ENCODE measurements at regions of chr19 and their contacts with region 1.

Region 1: GRCh38 chr19:41144403-41144802 is 30.2 kb downstream of the CYP2F1 start:
- DNase-seq: peak; percentile 83
- H3K4me3 ChIP-seq: no peak overlapping the region
- H3K27ac ChIP-seq: no peak overlapping the region
- H3K4me1 ChIP-seq: no peaks in the 10 kb centered on the region
- H3K27me3 ChIP-seq: peaks cover 8% of the 10 kb centered on the region
- CTCF ChIP-seq: peak; percentile 85

Region 2: DNA sequence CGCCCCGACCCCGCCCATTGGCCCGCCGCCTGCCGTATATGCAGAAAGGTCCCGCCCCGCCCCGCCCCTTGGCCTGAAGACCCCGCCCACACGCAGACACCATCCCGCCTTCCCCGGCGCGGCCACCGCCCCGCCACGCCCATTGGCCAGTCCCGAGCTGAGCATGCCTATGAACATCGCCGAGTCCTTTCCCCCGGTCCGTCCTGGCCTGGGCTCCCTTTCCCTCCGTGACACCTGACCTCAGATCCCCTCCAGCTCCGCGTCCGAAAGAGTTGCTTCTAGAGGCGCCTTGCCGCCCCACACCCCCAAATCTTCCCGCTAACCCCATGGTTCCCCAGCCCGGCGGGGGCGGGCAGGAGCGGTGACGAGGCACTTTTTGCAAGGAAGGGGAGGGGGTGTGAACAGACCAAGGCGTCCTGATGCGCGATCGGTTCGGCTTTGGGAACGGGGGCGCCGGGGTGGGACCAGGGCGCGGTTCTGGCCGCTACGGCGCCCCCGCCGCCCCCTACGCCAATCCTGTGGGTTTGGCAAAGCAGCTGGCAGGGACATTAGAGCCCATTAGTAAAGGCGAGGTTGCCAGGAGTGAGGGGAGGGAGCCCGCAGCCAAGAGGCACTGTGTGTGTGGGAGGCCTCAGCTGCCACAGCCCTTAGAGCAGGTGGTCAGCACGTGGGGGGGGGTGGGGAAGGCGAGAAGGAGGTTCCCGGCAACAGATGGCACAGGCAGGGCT is 453.5 kb before region 1 on chr19:
- CTCF ChIA-PET with region 1: interaction called, 10 read pairs
- POLR2A ChIA-PET with region 1: no interaction called
- intact Hi-C with region 1: no loop called
- DNase-seq: peak; percentile 93
- H3K4me3 ChIP-seq: peak overlapping the region; percentile 94
- H3K27ac ChIP-seq: peak overlapping the region; percentile 96
- H3K4me1 ChIP-seq: peaks cover 17% of the 10 kb centered on the region
- H3K27me3 ChIP-seq: no peaks in the 10 kb centered on the region
- CTCF ChIP-seq: no peak

Region 3: DNA sequence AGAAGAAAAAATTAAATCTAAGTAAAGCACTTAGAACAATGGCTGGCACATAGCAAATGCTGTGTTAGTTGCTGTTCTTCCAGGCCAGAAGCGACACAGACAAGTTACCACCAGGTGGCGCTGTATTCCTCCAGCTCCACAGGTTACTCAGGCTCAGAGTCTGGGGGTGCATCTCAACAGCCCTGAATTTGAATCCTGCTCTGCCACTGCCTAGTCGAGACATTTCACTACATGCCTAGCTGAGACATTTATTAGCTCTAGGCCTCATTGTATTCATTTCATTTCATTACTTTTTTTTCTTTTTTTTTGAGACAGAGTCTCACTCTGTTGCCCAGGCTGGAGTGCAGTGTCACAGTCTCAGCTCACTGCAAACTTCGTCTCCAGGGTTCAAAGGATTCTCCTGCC is 169.8 kb before region 1 on chr19:
- CTCF ChIA-PET with region 1: interaction called, 4 read pairs
- POLR2A ChIA-PET with region 1: no interaction called
- intact Hi-C with region 1: loop called (anchors 5 kb)
- DNase-seq: peak; percentile 82
- H3K4me3 ChIP-seq: no peak overlapping the region
- H3K27ac ChIP-seq: no peak overlapping the region
- H3K4me1 ChIP-seq: no peaks in the 10 kb centered on the region
- H3K27me3 ChIP-seq: no peaks in the 10 kb centered on the region
- CTCF ChIP-seq: peak; percentile 86

Region 4: GRCh38 chr19:41076286-41076685 is 68.1 kb before region 1 on chr19:
- CTCF ChIA-PET with region 1: interaction called, 11 read pairs
- POLR2A ChIA-PET with region 1: no interaction called
- intact Hi-C with region 1: no loop called
- DNase-seq: no peak
- H3K4me3 ChIP-seq: no peak overlapping the region
- H3K27ac ChIP-seq: no peak overlapping the region
- H3K4me1 ChIP-seq: no peaks in the 10 kb centered on the region
- H3K27me3 ChIP-seq: peaks cover 28% of the 10 kb centered on the region
- CTCF ChIP-seq: no peak

Region 5: DNA sequence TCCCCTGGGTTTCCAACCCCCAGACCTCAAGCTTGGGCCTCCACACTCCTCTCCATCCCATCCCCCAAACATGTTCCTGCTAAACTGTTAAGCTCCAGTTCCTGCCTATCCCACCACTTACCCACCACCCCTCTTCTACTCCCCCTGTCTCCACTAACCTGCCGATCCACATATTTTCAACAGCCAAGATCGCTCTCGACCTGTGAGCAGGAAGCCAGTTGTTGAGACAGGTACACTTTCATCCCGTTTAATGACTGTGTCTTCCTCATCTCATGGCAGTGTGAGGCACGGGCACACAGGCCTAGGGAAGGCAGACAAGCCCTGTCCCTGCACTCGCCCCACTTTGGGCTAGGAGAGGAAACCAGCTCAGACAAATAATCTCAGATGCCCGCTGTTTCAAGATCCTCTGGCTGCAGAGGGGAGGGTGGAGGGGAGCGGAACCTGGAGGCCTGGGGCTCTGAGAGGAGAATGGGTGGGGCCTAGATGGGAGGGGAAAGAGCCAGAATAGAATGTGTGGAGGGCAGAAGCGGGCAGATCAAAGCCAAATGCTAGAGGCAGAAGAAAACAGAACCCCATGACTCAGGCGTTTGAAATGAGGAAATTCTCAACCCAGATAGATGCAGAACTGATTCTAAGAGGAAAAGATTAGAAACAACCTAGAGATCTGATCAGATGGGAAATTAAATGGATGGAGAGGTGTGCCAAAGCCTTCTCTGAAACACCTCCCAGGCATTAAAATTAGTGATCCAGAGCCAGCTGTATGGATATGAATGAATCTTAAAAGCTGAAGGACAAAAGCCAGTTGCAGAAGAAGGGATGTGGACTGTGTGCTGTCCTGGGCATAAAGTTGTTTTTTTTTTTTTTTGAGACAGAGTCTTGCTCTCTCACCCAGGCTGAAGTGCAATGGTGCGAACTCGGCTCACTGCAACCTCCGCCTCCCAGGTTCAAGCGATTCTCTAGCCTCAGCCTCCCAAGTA is 31.7 kb after region 1 on chr19:
- CTCF ChIA-PET with region 1: no interaction called
- POLR2A ChIA-PET with region 1: no interaction called
- intact Hi-C with region 1: no loop called
- DNase-seq: peak; percentile 40
- H3K4me3 ChIP-seq: no peak overlapping the region
- H3K27ac ChIP-seq: no peak overlapping the region
- H3K4me1 ChIP-seq: no peaks in the 10 kb centered on the region
- H3K27me3 ChIP-seq: no peaks in the 10 kb centered on the region
- CTCF ChIP-seq: no peak